Sigmoid colon (tissue), 7 donors: ENCODE measurements at regions of chr11 and their contacts with region 1.

Region 1: GRCh38 chr11:85854557-85855340 is 434 bp upstream of the CCDC83 start:
- DNase-seq: peak; percentile 95
- H3K4me3 ChIP-seq: peak overlapping the region; percentile 35 to 69 (median 58)
- H3K27ac ChIP-seq: peak overlapping the region; percentile 81 to 87 (median 84)
- H3K4me1 ChIP-seq: peaks cover 0 to 14% (median 7%) of the 10 kb centered on the region in 4 donors
- H3K27me3 ChIP-seq: no peaks in the 10 kb centered on the region
- CTCF ChIP-seq: peak; percentile 68 to 99 (median 82)
- EP300 ChIP-seq: no peak
- POLR2A ChIP-seq: no peak

Region 2: GRCh38 chr11:85682330-85683305 is 172.1 kb before region 1 on chr11:
- intact Hi-C with region 1: loop called (anchors 10 kb)
- DNase-seq: peak; percentile 84
- H3K4me3 ChIP-seq: peak overlapping the region; percentile 46 to 65 (median 63)
- H3K27ac ChIP-seq: peak overlapping the region; percentile 32 to 66 (median 60)
- H3K4me1 ChIP-seq: peaks cover 0 to 21% (median 12%) of the 10 kb centered on the region in 4 donors
- H3K27me3 ChIP-seq: no peaks in the 10 kb centered on the region
- CTCF ChIP-seq: no peak
- EP300 ChIP-seq: no peak
- POLR2A ChIP-seq: no peak

Region 3: DNA sequence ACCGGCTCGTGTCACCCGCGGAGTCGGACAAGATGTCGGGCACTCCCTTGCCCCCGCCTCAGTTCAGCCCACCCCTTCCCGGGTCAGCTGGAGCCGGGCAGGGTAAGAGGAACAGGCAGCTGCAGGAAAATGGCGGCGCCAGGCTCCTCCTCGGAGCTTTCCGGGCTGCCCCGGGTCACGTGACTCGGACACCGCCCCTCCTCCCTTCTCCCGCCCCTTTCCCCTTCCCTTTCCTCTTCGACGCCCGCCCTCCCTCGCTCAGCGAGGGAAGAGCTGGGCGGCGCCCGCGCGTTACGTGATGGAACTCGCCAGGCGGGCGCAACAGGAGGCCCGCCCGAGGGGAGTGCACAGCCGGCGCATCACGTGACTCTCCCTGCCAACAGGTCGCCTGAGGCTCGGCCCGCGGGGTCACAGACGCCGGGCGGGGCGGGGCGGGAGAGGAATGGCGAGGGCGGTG is 214.2 kb after region 1 on chr11 and contains the start of gene PICALM:
- intact Hi-C with region 1: loop called (anchors 10 kb)
- DNase-seq: peak; percentile 99
- H3K4me3 ChIP-seq: peak within 1 kb of the TSS; percentile 88 to 98 (median 94)
- H3K27ac ChIP-seq: peak within 1 kb of the TSS; percentile 95 to 99 (median 97)
- H3K4me1 ChIP-seq: peaks cover 0 to 37% (median 31%) of the 10 kb centered on the region in 4 donors
- H3K27me3 ChIP-seq: no peaks in the 10 kb centered on the region
- CTCF ChIP-seq: no peak
- EP300 ChIP-seq: peak in 2 of 4 donors; percentile 54 to 93
- POLR2A ChIP-seq: peak; percentile 74 to 75
- total RNA-seq, gene PICALM: 213 to 250 (median 230) TPM

Region 4: GRCh38 chr11:86302100-86302793 is 447.5 kb after region 1 on chr11 and contains the start of gene HIKESHI:
- intact Hi-C with region 1: loop called (anchors 2 kb)
- DNase-seq: peak; percentile 100
- H3K4me3 ChIP-seq: peak within 1 kb of the TSS; percentile 70 to 91 (median 79)
- H3K27ac ChIP-seq: peak within 1 kb of the TSS; percentile 84 to 94 (median 89)
- H3K4me1 ChIP-seq: peaks cover 0 to 21% (median 20%) of the 10 kb centered on the region in 4 donors
- H3K27me3 ChIP-seq: no peaks in the 10 kb centered on the region
- CTCF ChIP-seq: no peak
- EP300 ChIP-seq: peak in 1 of 4 donors; percentile 58
- POLR2A ChIP-seq: peak in 1 of 2 donors; percentile 42
- total RNA-seq, gene HIKESHI: 59.8 to 71.3 (median 65.2) TPM